Activated B cell treated with CpG ODN at 0.5 μM for 24 hours (primary cell): ENCODE measurements at regions of chr3 and their contacts with region 1.

Region 1: DNA sequence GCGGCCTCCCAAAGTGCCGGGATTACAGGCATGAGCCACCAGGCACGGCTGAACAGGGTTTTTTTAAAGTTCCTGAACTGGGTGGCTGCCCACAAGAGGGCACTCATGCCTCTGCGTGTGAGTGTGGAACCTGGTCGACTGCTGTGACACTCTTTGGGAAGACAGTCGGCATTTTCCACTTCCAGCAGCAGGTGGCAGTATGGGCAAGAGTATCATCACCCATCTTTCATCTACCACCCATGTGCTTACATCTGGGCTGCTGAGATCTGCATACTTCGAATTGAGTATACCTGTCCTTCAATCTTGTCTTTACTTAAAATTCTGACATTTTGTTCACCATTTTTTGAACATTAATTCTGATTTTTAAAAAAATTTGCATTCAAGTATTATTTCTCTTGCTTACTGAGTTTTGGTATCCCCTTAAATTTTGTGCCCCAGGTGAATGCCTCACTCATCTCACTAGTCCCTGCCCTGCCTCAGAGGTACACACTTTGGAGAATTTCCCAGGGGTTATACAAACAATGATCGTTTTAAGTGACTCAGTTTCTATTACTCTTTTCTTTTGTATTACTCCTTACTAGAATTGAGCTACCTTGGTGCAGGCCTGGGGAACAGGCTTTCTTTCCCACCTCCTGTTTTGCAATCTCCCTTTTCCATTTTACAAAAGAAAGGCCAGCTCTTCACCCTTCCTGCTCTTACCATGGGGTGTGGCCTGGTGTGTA is 11.8 kb downstream of the CLEC3B start:
- DNase-seq: peak; percentile 69
- ATAC-seq: peak; percentile 99
- H3K4me3 Mint-ChIP-seq: no peak overlapping the region
- H3K27ac Mint-ChIP-seq: no peak overlapping the region
- H3K4me1 Mint-ChIP-seq: peaks cover 33% of the 10 kb centered on the region
- H3K27me3 Mint-ChIP-seq: peaks cover 14% of the 10 kb centered on the region
- CTCF ChIP-seq: peak; percentile 67

Region 2: GRCh38 chr3:44976002-44976815 is 61.7 kb before region 1 on chr3 and contains the starts of genes EXOSC7 and ZDHHC3:
- CTCF ChIA-PET with region 1: interaction called, 6 read pairs
- POLR2A ChIA-PET with region 1: no interaction called
- intact Hi-C with region 1: loop called (anchors 1 kb)
- DNase-seq: peak; percentile 76
- ATAC-seq: peak; percentile 94
- H3K4me3 Mint-ChIP-seq: peak within 1 kb of the TSS; percentile 93
- H3K27ac Mint-ChIP-seq: peak within 1 kb of the TSS; percentile 88
- H3K4me1 Mint-ChIP-seq: peaks cover 49% of the 10 kb centered on the region
- H3K27me3 Mint-ChIP-seq: no peaks in the 10 kb centered on the region
- CTCF ChIP-seq: no peak
- total RNA-seq, gene EXOSC7: 42.5 and 44.0 TPM in 2 replicates
- total RNA-seq, gene ZDHHC3: 38.5 and 43.4 TPM in 2 replicates

Region 3: GRCh38 chr3:45188719-45189659 is 151.1 kb after region 1 on chr3:
- CTCF ChIA-PET with region 1: no interaction called
- POLR2A ChIA-PET with region 1: no interaction called
- intact Hi-C with region 1: no loop called
- DNase-seq: no peak
- ATAC-seq: no peak
- H3K4me3 Mint-ChIP-seq: no peak overlapping the region
- H3K27ac Mint-ChIP-seq: no peak overlapping the region
- H3K4me1 Mint-ChIP-seq: no peaks in the 10 kb centered on the region
- H3K27me3 Mint-ChIP-seq: peaks cover 3% of the 10 kb centered on the region
- CTCF ChIP-seq: no peak

Region 4: GRCh38 chr3:45210308-45211041 is 172.6 kb after region 1 on chr3:
- CTCF ChIA-PET with region 1: interaction called, 31 read pairs
- POLR2A ChIA-PET with region 1: no interaction called
- intact Hi-C with region 1: no loop called
- DNase-seq: peak; percentile 29
- ATAC-seq: peak; percentile 71
- H3K4me3 Mint-ChIP-seq: no peak overlapping the region
- H3K27ac Mint-ChIP-seq: no peak overlapping the region
- H3K4me1 Mint-ChIP-seq: no peaks in the 10 kb centered on the region
- H3K27me3 Mint-ChIP-seq: peaks cover 13% of the 10 kb centered on the region
- CTCF ChIP-seq: no peak

Region 5: GRCh38 chr3:45499529-45499928 is 461.6 kb after region 1 on chr3:
- CTCF ChIA-PET with region 1: interaction called, 3 read pairs
- POLR2A ChIA-PET with region 1: no interaction called
- intact Hi-C with region 1: loop called (anchors 1 kb)
- DNase-seq: no peak
- ATAC-seq: no peak
- H3K4me3 Mint-ChIP-seq: no peak overlapping the region
- H3K27ac Mint-ChIP-seq: no peak overlapping the region
- H3K4me1 Mint-ChIP-seq: no peaks in the 10 kb centered on the region
- H3K27me3 Mint-ChIP-seq: no peaks in the 10 kb centered on the region
- CTCF ChIP-seq: no peak

Region 6: GRCh38 chr3:45929042-45929679 is 891.3 kb after region 1 on chr3:
- CTCF ChIA-PET with region 1: no interaction called
- POLR2A ChIA-PET with region 1: no interaction called
- intact Hi-C with region 1: loop called (anchors 1 kb)
- DNase-seq: peak; percentile 54
- ATAC-seq: peak; percentile 92
- H3K4me3 Mint-ChIP-seq: no peak overlapping the region
- H3K27ac Mint-ChIP-seq: no peak overlapping the region
- H3K4me1 Mint-ChIP-seq: no peaks in the 10 kb centered on the region
- H3K27me3 Mint-ChIP-seq: no peaks in the 10 kb centered on the region
- CTCF ChIP-seq: no peak

Region 7: GRCh38 chr3:46378426-46378942 is 1340.6 kb after region 1 on chr3:
- CTCF ChIA-PET with region 1: no interaction called
- POLR2A ChIA-PET with region 1: no interaction called
- intact Hi-C with region 1: loop called (anchors 5 kb)
- DNase-seq: peak; percentile 42
- ATAC-seq: peak; percentile 40
- H3K4me3 Mint-ChIP-seq: no peak overlapping the region
- H3K27ac Mint-ChIP-seq: no peak overlapping the region
- H3K4me1 Mint-ChIP-seq: peaks cover 43% of the 10 kb centered on the region
- H3K27me3 Mint-ChIP-seq: no peaks in the 10 kb centered on the region
- CTCF ChIP-seq: no peak